ENCODE measurements at regions of chr19 and their contacts with region 1.

Region 1: DNA sequence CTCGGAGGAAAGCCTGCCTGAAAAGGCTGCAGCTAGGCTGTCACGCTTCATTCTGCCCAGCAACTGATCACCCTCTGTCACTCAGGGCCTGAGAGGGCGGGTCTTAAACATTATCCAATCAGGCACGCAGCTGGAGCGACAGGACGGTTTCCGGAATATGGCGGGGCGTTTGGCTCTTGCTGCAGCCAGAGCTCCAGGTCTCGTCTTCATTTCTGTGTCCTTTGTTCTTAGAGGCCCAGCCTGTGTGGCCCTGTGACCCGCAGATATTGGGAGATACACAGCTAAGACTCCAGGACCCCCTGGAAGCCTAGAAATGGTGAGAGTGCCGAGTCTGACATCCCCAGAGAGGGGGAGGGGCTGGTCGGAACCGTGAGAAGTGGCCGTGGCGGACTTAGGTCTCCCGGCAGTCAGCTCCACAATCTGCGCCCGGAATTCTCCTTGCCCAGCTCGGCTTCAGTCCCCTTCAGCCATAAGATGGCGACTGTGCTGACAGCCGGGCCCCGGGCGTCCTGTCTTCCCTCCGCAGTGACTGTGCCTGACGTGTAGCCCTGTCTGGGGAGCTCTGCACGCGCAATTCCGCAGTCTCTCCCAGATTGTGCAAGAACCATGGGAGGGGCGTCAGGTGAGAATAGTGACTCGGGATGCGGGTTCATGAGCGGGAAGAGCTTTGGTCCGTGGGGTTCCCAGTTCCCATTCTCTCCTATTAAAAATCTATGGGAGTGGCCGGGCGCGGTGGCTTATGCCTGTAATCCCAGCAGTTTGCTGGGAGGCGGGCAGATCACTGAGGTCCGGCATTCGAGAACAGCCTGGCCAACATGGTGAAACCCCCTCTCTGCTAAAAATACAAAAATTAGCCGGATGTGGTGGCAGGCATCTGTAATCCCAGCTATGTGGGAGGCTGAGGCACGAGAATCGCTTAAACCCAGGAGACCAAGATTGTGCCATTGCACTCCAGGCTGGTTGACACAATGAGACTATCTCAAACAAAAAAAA is at the start of gene ZNF429:
- DNase-seq: peak; percentile 93
- ATAC-seq: peak; percentile 100
- H3K4me3 ChIP-seq: peak within 1 kb of the TSS; percentile 80 to 99 (median 97)
- H3K4me3 Mint-ChIP-seq: peak within 1 kb of the TSS; percentile 100
- H3K27ac ChIP-seq: peak within 1 kb of the TSS; percentile 86 to 88
- H3K27ac Mint-ChIP-seq: peak within 1 kb of the TSS; percentile 98
- H3K4me1 ChIP-seq: peaks cover 13 to 20% of the 10 kb centered on the region in 2 donors
- H3K4me1 Mint-ChIP-seq: peaks cover 39% of the 10 kb centered on the region
- H3K27me3 ChIP-seq: no peaks in the 10 kb centered on the region
- H3K27me3 Mint-ChIP-seq: no peaks in the 10 kb centered on the region
- CTCF ChIP-seq: no peak
- total RNA-seq, gene ZNF429: 23.2 and 29.4 TPM in 2 replicates

Region 2: DNA sequence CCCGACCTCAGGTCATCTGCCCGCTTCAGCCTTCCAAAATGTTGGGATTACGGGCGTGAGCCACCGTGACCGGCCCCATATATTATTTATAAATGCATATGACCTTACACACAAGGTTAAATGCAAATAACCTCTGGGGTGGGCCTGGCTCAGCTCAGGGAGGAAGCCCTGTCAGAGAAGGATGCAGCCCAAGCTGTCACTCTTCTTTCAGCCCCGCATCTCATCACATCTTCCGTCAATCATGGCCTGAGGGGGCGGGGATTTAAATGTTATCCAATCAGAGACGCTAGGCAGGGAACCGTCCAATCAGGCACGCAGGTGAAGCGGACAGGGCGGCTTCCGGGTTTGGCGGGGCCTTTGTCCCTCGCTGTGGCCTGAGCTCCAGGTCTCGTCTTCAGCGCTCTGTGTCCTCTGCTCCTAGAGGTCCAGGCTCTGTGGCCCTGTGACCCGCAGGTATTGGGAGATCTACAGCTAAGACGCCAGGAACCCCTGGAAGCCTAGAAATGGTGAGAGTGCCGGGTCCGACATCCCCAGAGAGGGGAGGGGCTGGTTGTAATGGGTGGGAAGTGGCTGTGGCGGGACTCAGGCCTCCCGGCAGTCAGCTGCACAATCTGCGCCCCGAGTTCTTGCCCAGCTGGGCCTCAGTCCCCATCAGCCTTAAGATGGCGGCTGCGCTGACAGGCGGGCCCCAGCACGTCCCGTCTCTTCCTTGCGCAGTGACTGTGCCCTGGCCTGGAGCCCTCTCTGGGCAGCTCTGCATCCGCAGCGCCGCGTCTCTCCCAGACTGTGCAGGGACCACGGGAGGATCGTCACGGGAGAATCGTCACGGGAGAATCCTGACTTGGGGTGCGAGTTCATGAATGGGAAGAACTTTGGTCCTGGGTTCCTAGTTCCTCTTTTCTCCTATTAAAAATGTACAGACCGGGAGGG is 485.2 kb before region 1 on chr19 and contains the start of gene ZNF430:
- CTCF ChIA-PET with region 1: no interaction called
- POLR2A ChIA-PET with region 1: no interaction called
- intact Hi-C with region 1: loop called (anchors 10 kb)
- DNase-seq: peak; percentile 96
- ATAC-seq: peak; percentile 98
- H3K4me3 ChIP-seq: peak within 1 kb of the TSS; percentile 77 to 98 (median 91)
- H3K4me3 Mint-ChIP-seq: peak within 1 kb of the TSS; percentile 99
- H3K27ac ChIP-seq: peak within 1 kb of the TSS; percentile 95 to 98
- H3K27ac Mint-ChIP-seq: peak within 1 kb of the TSS; percentile 99
- H3K4me1 ChIP-seq: peaks cover 19 to 23% of the 10 kb centered on the region in 2 donors
- H3K4me1 Mint-ChIP-seq: peaks cover 41% of the 10 kb centered on the region
- H3K27me3 ChIP-seq: no peaks in the 10 kb centered on the region
- H3K27me3 Mint-ChIP-seq: no peaks in the 10 kb centered on the region
- CTCF ChIP-seq: no peak
- total RNA-seq, gene ZNF430: 45.4 and 45.5 TPM in 2 replicates

Region 3: DNA sequence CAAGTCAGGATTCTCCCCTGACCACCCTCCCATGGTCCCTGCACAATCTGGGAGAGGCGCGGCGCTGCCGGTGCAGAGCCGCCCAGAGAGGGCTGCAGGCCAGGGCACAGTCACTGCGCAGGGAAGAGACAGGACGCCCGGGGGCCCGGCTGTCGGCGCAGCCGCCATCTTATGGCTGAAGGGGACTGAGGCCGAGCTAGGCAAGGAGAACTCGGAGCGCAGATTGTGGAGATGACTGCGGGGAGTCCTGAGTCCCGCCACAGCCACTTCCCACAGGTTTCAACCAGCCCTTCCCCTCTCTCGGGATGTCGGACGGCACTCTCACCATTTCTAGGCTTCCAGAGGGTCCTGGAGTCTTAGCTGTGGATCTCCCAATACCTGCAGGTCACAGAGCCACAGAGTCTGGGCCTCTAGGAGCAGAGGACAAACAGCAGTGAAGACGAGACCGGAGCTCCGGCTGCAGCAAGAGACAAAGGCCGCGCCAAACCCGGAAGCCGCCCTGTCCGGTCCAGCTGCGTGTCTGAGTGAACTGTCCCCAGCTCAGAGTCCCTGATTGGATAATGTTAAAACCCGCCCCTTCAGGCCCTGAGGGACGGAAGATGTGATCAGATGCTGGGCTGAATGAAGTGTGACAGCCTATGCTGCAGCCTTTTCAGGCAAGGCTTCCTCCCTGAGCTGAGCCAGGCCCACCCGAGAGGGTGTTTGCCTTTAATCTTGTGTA is 176.7 kb before region 1 on chr19 and contains the start of gene ZNF708:
- CTCF ChIA-PET with region 1: no interaction called
- POLR2A ChIA-PET with region 1: interaction called, 8 read pairs
- intact Hi-C with region 1: loop called (anchors 1 kb)
- DNase-seq: peak; percentile 88
- ATAC-seq: peak; percentile 99
- H3K4me3 ChIP-seq: peak within 1 kb of the TSS; percentile 85 to 100 (median 96)
- H3K4me3 Mint-ChIP-seq: peak within 1 kb of the TSS; percentile 99
- H3K27ac ChIP-seq: peak within 1 kb of the TSS; percentile 97 to 99
- H3K27ac Mint-ChIP-seq: peak within 1 kb of the TSS; percentile 99
- H3K4me1 ChIP-seq: peaks cover 9 to 16% of the 10 kb centered on the region in 2 donors
- H3K4me1 Mint-ChIP-seq: peaks cover 39% of the 10 kb centered on the region
- H3K27me3 ChIP-seq: no peaks in the 10 kb centered on the region
- H3K27me3 Mint-ChIP-seq: no peaks in the 10 kb centered on the region
- CTCF ChIP-seq: no peak
- total RNA-seq, gene ZNF708: 37.7 and 38.2 TPM in 2 replicates

Region 4: DNA sequence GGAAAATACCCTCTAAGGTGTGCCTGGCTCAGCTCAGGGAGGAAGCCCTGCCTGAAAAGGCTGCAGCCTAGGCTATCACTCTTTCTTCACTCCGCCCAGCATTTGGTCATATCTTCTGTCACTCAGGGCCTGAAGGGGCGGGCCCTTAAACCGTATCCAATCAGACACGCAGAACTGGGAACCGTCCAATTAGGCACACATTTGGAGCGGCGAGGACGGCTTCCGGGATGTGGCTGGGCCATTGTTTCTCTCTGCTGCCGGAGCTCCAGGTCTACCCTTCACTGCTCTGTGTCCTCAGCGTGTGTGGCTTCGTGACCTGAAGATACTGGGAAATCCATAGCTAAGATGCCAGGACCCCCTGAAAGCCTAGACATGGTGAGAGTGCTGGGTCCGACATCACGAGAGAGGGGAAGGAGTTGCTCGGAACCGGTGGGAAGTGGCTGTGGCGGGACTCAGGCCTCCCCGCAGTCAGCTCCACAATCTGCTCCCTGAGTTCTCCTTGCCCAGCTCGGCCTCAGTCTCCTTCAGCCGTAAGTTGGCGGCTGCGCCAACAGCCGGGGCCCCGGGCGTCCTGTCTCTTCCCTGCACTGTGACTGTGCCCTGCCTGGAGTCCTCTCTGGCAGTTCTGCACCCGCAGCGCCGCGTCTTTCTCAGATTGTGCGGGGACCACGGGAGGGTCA is 108.7 kb before region 1 on chr19 and contains the start of gene ZNF493:
- CTCF ChIA-PET with region 1: no interaction called
- POLR2A ChIA-PET with region 1: interaction called, 4 read pairs
- intact Hi-C with region 1: loop called (anchors 1 kb)
- DNase-seq: peak; percentile 93
- ATAC-seq: peak; percentile 100
- H3K4me3 ChIP-seq: peak within 1 kb of the TSS; percentile 63 to 96 (median 75)
- H3K4me3 Mint-ChIP-seq: peak within 1 kb of the TSS; percentile 94
- H3K27ac ChIP-seq: peak within 1 kb of the TSS; percentile 62 to 64
- H3K27ac Mint-ChIP-seq: peak within 1 kb of the TSS; percentile 88
- H3K4me1 ChIP-seq: peaks cover 12 to 15% of the 10 kb centered on the region in 2 donors
- H3K4me1 Mint-ChIP-seq: peaks cover 23% of the 10 kb centered on the region
- H3K27me3 ChIP-seq: no peaks in the 10 kb centered on the region
- H3K27me3 Mint-ChIP-seq: no peaks in the 10 kb centered on the region
- CTCF ChIP-seq: no peak
- total RNA-seq, gene ZNF493: 79.0 and 85.3 TPM in 2 replicates

Region 5: GRCh38 chr19:21626924-21627697 is 121.4 kb after region 1 on chr19:
- CTCF ChIA-PET with region 1: no interaction called
- POLR2A ChIA-PET with region 1: no interaction called
- intact Hi-C with region 1: no loop called
- DNase-seq: no peak
- ATAC-seq: no peak
- H3K4me3 ChIP-seq: no peak overlapping the region
- H3K4me3 Mint-ChIP-seq: no peak overlapping the region
- H3K27ac ChIP-seq: no peak overlapping the region
- H3K27ac Mint-ChIP-seq: no peak overlapping the region
- H3K4me1 ChIP-seq: no peaks in the 10 kb centered on the region
- H3K4me1 Mint-ChIP-seq: no peaks in the 10 kb centered on the region
- H3K27me3 ChIP-seq: no peaks in the 10 kb centered on the region
- H3K27me3 Mint-ChIP-seq: no peaks in the 10 kb centered on the region
- CTCF ChIP-seq: no peak

Region 6: GRCh38 chr19:21767065-21767800 is 261.5 kb after region 1 on chr19 and contains the start of gene ZNF100:
- CTCF ChIA-PET with region 1: no interaction called
- POLR2A ChIA-PET with region 1: no interaction called
- intact Hi-C with region 1: loop called (anchors 5 kb)
- DNase-seq: peak; percentile 89
- ATAC-seq: peak; percentile 97
- H3K4me3 ChIP-seq: peak within 1 kb of the TSS; percentile 77 to 91 (median 79)
- H3K4me3 Mint-ChIP-seq: peak within 1 kb of the TSS; percentile 96
- H3K27ac ChIP-seq: peak within 1 kb of the TSS; percentile 82 to 90
- H3K27ac Mint-ChIP-seq: peak within 1 kb of the TSS; percentile 90
- H3K4me1 ChIP-seq: peaks cover 9 to 10% of the 10 kb centered on the region in 2 donors
- H3K4me1 Mint-ChIP-seq: peaks cover 17% of the 10 kb centered on the region
- H3K27me3 ChIP-seq: no peaks in the 10 kb centered on the region
- H3K27me3 Mint-ChIP-seq: no peaks in the 10 kb centered on the region
- CTCF ChIP-seq: no peak
- total RNA-seq, gene ZNF100: 16.0 and 21.6 TPM in 2 replicates

Region 7: GRCh38 chr19:21851596-21852345 is 346.0 kb after region 1 on chr19:
- CTCF ChIA-PET with region 1: no interaction called
- POLR2A ChIA-PET with region 1: no interaction called
- intact Hi-C with region 1: loop called (anchors 5 kb)
- DNase-seq: peak; percentile 90
- ATAC-seq: peak; percentile 99
- H3K4me3 ChIP-seq: peak overlapping the region; percentile 68 to 98 (median 96)
- H3K4me3 Mint-ChIP-seq: peak overlapping the region; percentile 95
- H3K27ac ChIP-seq: peak overlapping the region; percentile 74 to 93
- H3K27ac Mint-ChIP-seq: peak overlapping the region; percentile 91
- H3K4me1 ChIP-seq: peaks cover 5 to 15% of the 10 kb centered on the region in 2 donors
- H3K4me1 Mint-ChIP-seq: peaks cover 21% of the 10 kb centered on the region
- H3K27me3 ChIP-seq: no peaks in the 10 kb centered on the region
- H3K27me3 Mint-ChIP-seq: no peaks in the 10 kb centered on the region
- CTCF ChIP-seq: no peak

Measured in B cell (primary cell).